Sigmoid colon (tissue), 7 donors: ENCODE measurements at regions of chr6 and their contacts with region 1.

Region 1: DNA sequence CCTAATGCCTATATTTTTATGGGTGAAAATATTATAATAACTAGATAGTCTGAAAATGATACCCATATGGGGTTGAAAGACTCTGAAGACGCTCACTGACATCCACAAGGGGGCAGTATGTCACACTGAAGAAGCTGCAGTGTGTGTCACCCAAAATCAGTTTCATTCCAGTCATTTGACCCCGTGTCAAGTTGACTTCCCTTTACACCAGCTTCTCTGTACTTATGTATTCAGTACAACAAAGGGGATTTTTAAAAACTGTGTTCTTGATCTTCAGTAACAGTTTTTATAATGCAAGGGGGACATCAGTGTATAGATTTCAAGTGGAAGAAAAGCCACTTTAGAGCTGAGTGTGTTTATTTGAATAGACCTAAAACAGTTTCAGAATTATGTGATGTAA is 19.3 kb downstream of the FAXC start:
- DNase-seq: no peak
- H3K4me3 ChIP-seq: no peak overlapping the region
- H3K27ac ChIP-seq: peak overlapping the region in 1 of 4 donors; percentile 41
- H3K4me1 ChIP-seq: peaks cover 0 to 11% (median 7%) of the 10 kb centered on the region in 4 donors
- H3K27me3 ChIP-seq: no peaks in the 10 kb centered on the region
- CTCF ChIP-seq: peak; percentile 41 to 75 (median 58)
- EP300 ChIP-seq: no peak
- POLR2A ChIP-seq: no peak

Region 2: DNA sequence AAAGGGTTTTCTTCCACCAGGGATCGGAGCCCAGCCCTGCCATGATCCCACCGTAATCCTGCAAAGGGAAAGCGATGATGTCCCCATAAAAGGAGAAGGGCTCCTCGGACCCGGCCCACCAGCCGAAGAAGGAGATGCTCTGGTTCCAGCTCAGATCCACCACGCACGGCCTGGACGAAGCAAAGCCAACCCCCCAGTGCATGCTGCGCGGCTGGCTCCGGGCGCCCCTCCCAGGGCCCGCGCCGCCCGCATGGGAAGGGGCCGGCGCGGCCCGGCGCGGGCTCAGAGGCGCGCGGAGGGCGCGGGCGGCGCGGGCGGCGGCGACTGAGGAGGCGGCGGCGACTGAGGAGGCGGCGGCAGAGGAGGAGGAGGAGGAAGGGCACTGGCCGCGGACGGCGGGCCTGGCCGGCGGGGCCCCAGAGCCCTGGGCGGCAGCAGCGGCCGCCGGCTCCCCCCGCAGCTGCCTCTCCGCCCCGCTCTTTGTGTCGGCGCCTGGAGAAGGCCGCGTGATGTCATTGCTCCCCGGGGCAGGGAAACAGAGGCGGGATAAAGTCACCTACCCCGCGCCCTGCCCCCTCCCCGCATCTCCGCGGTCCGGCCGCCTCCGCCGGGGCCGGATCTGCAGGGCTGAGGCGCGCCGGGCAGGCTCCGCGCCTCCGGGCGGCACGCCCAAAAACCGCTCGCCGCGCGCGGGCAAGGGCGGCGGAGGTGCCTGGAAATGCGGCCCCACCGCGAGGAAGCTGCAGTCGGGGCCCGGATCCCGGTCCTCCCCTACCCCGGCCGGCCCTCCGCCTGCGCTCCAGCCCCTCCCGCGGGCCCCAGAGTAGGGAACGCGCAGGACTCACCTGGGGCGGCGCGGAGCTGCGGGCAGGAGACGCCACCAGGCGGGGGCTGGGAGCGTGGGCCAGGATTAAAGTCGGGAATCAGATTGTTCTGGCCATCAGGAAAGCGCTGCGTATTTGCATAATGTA is 19.3 kb after region 1 on chr6 and contains the start of gene FAXC:
- intact Hi-C with region 1: loop called (anchors 2 kb)
- DNase-seq: peak; percentile 79
- H3K4me3 ChIP-seq: peak within 1 kb of the TSS; percentile 49 to 90 (median 76)
- H3K27ac ChIP-seq: peak within 1 kb of the TSS; percentile 92 to 93 (median 93)
- H3K4me1 ChIP-seq: peaks cover 0 to 39% (median 13%) of the 10 kb centered on the region in 4 donors
- H3K27me3 ChIP-seq: peaks cover 0 to 3% (median 0%) of the 10 kb centered on the region in 3 donors
- CTCF ChIP-seq: peak in 3 of 4 experiments; percentile 10 to 42 (median 32)
- EP300 ChIP-seq: no peak
- POLR2A ChIP-seq: no peak
- total RNA-seq, gene FAXC: 23.1 to 54.0 (median 39.0) TPM

Region 3: GRCh38 chr6:99378636-99379035 is 48.5 kb after region 1 on chr6:
- intact Hi-C with region 1: no loop called
- DNase-seq: no peak
- H3K4me3 ChIP-seq: no peak overlapping the region
- H3K27ac ChIP-seq: no peak overlapping the region
- H3K4me1 ChIP-seq: no peaks in the 10 kb centered on the region
- H3K27me3 ChIP-seq: no peaks in the 10 kb centered on the region
- CTCF ChIP-seq: no peak
- EP300 ChIP-seq: no peak
- POLR2A ChIP-seq: no peak

Region 4: GRCh38 chr6:99393698-99394531 is 63.8 kb after region 1 on chr6 and contains the start of gene COQ3:
- intact Hi-C with region 1: loop called (anchors 2 kb)
- DNase-seq: peak; percentile 76
- H3K4me3 ChIP-seq: peak within 1 kb of the TSS; percentile 69 to 88 (median 75)
- H3K27ac ChIP-seq: peak within 1 kb of the TSS; percentile 83 to 86 (median 86)
- H3K4me1 ChIP-seq: peaks cover 0 to 9% (median 4%) of the 10 kb centered on the region in 4 donors
- H3K27me3 ChIP-seq: no peaks in the 10 kb centered on the region
- CTCF ChIP-seq: no peak
- EP300 ChIP-seq: no peak
- POLR2A ChIP-seq: no peak
- total RNA-seq, gene COQ3: 3.0 to 7.9 (median 7.4) TPM

Region 5: GRCh38 chr6:99425647-99426453 is 95.7 kb after region 1 on chr6:
- intact Hi-C with region 1: loop called (anchors 2 kb)
- DNase-seq: peak; percentile 93
- H3K4me3 ChIP-seq: peak overlapping the region; percentile 70 to 90 (median 78)
- H3K27ac ChIP-seq: peak overlapping the region; percentile 92 to 97 (median 96)
- H3K4me1 ChIP-seq: peaks cover 0 to 57% (median 48%) of the 10 kb centered on the region in 4 donors
- H3K27me3 ChIP-seq: no peaks in the 10 kb centered on the region
- CTCF ChIP-seq: peak; percentile 34 to 53 (median 42)
- EP300 ChIP-seq: peak in 1 of 4 donors; percentile 28
- POLR2A ChIP-seq: peak in 1 of 2 donors; percentile 9

Region 6: GRCh38 chr6:99520855-99521632 is 190.9 kb after region 1 on chr6:
- intact Hi-C with region 1: loop called (anchors 5 kb)
- DNase-seq: peak; percentile 92
- H3K4me3 ChIP-seq: peak overlapping the region; percentile 63 to 72 (median 70)
- H3K27ac ChIP-seq: peak overlapping the region; percentile 90 to 91 (median 90)
- H3K4me1 ChIP-seq: peaks cover 0 to 19% (median 15%) of the 10 kb centered on the region in 4 donors
- H3K27me3 ChIP-seq: no peaks in the 10 kb centered on the region
- CTCF ChIP-seq: peak; percentile 76 to 94 (median 86)
- EP300 ChIP-seq: peak in 1 of 4 donors; percentile 4
- POLR2A ChIP-seq: peak; percentile 75 to 84